ENCODE measurements at regions of chr4 and their contacts with region 1.

Region 1: DNA sequence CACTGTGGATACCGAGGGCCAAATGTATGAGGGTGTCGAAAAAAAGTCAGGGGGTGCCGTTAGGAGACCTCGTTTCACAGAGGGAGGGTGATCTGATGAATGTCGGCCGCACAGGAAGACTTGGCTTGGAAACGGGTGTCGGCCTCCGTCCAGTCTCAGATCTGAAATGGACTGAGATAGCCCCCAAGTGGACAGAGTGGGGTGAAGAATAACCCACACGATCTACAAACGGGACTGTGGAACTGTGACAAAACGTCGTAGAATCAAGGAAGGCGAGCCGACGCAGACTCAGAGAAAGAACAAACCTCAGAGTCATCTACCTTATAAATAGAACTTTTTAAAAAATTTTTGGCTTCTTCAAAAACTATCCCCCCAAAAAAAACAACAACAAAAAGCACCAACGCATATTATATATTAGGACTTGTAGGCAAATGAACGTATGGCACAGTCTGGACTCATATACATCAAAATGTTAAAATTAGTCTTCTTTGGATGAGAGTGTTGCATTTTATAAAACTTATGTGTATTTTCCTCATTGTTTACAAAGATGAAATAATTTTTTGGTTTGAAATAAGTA is 63.8 kb upstream of the IRF2 start:
- DNase-seq: peak; percentile 85
- ATAC-seq: peak; percentile 92
- H3K4me3 ChIP-seq: peak overlapping the region; percentile 75 to 98 (median 87)
- H3K27ac ChIP-seq: peak overlapping the region; percentile 71
- H3K4me1 ChIP-seq: peaks cover 41% of the 10 kb centered on the region
- H3K27me3 ChIP-seq: no peaks in the 10 kb centered on the region; a peak in 1 of 5 replicates
- CTCF ChIP-seq: peak; percentile 92
- EP300 ChIP-seq: no peak
- POLR2A ChIP-seq: no peak
- RAD21 ChIP-seq: peak; percentile 93

Region 2: DNA sequence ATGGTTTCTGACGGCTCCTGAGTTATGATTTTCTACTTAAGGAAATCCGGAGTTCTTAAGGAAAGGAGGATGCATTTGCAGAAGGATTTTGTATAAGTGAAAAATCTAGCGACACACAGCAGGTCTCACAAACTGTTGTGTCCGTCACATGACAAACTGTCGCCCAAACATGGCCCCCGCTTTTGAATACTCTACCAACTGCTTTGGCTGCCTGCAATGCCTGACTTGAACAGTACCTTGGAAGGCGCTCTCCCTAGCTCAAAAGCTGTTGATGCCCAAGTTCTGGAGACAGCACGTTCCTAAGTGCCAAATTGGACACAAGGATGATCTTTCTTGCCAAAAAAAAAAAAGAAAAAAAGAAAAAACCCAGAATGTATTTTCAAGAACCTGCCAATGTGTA is 423.7 kb before region 1 on chr4:
- CTCF ChIA-PET with region 1: no interaction called
- POLR2A ChIA-PET with region 1: no interaction called
- in situ Hi-C with region 1: no loop called
- intact Hi-C with region 1: no loop called
- DNase-seq: no peak
- ATAC-seq: peak; percentile 46; the same call in 1 of the 3 replicates
- H3K4me3 ChIP-seq: no peak overlapping the region
- H3K27ac ChIP-seq: no peak overlapping the region
- H3K4me1 ChIP-seq: no peaks in the 10 kb centered on the region; the same call in 1 of the 2 replicates
- H3K27me3 ChIP-seq: no peaks in the 10 kb centered on the region; a peak in 2 of 5 replicates
- CTCF ChIP-seq: no peak
- EP300 ChIP-seq: no peak
- POLR2A ChIP-seq: no peak
- RAD21 ChIP-seq: no peak

Region 3: GRCh38 chr4:184287697-184288255 is 250.3 kb before region 1 on chr4:
- CTCF ChIA-PET with region 1: interaction called, 4 read pairs
- POLR2A ChIA-PET with region 1: interaction called, 9 read pairs
- in situ Hi-C with region 1: no loop called
- intact Hi-C with region 1: loop called (anchors 2 kb)
- DNase-seq: peak; percentile 64
- ATAC-seq: peak; percentile 92
- H3K4me3 ChIP-seq: peak overlapping the region; percentile 38 to 47 (median 44); a peak in 5 of 6 replicates
- H3K27ac ChIP-seq: peak overlapping the region; percentile 44
- H3K4me1 ChIP-seq: peaks cover 58% of the 10 kb centered on the region
- H3K27me3 ChIP-seq: no peaks in the 10 kb centered on the region
- CTCF ChIP-seq: peak; percentile 75
- EP300 ChIP-seq: no peak; a peak in 1 of 4 replicates
- POLR2A ChIP-seq: no peak
- RAD21 ChIP-seq: peak; percentile 43; the same call in 1 of the 2 replicates

Region 4: GRCh38 chr4:184968784-184969201 is 430.7 kb after region 1 on chr4:
- CTCF ChIA-PET with region 1: no interaction called
- POLR2A ChIA-PET with region 1: no interaction called
- in situ Hi-C with region 1: no loop called
- intact Hi-C with region 1: no loop called
- DNase-seq: no peak
- ATAC-seq: peak; percentile 47
- H3K4me3 ChIP-seq: no peak overlapping the region
- H3K27ac ChIP-seq: no peak overlapping the region
- H3K4me1 ChIP-seq: no peaks in the 10 kb centered on the region
- H3K27me3 ChIP-seq: no peaks in the 10 kb centered on the region
- CTCF ChIP-seq: no peak
- EP300 ChIP-seq: no peak
- POLR2A ChIP-seq: no peak
- RAD21 ChIP-seq: no peak

Region 5: GRCh38 chr4:185833055-185833598 is 1295.0 kb after region 1 on chr4:
- CTCF ChIA-PET with region 1: no interaction called
- POLR2A ChIA-PET with region 1: no interaction called
- in situ Hi-C with region 1: no loop called
- intact Hi-C with region 1: no loop called
- DNase-seq: peak; percentile 66
- ATAC-seq: peak; percentile 27; the same call in 1 of the 3 replicates
- H3K4me3 ChIP-seq: no peak overlapping the region
- H3K27ac ChIP-seq: no peak overlapping the region
- H3K4me1 ChIP-seq: peaks cover 57% of the 10 kb centered on the region
- H3K27me3 ChIP-seq: no peaks in the 10 kb centered on the region
- CTCF ChIP-seq: no peak
- EP300 ChIP-seq: no peak
- POLR2A ChIP-seq: no peak
- RAD21 ChIP-seq: no peak